Common myeloid progenitor, CD34-positive (primary cell): ENCODE measurements at regions of chr9 and their contacts with region 1.

Region 1: GRCh38 chr9:36023260-36024048 is 13.3 kb upstream of the RECK start:
- DNase-seq: peak; percentile 74 to 87 (median 81)
- H3K4me3 ChIP-seq: no peak overlapping the region
- H3K27ac ChIP-seq: no peak overlapping the region
- H3K4me1 ChIP-seq: no peaks in the 10 kb centered on the region
- H3K27me3 ChIP-seq: no peaks in the 10 kb centered on the region

Region 2: DNA sequence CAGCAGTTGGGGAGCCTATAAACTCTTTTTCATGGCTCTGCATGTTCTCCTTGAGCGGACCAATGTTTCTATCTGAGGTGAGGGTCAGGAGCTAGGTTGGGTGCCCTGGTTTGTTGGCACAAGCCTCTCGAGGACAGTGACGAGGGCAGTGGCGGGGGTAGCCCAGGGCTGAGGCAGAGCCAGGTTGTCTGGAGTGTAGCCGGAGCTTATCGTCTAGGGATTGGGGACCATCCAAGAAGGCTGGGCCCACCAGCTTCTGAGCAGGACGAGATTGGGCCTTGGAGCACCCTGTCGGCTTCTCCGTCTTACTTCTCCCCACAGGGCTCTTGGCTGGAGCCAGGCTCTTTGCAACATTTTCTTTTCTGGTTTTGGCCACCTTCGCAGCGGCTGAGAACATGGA is 1300.3 kb before region 1 on chr9:
- CTCF ChIA-PET with region 1: no interaction called
- POLR2A ChIA-PET with region 1: no interaction called
- DNase-seq: no peak
- H3K4me3 ChIP-seq: no peak overlapping the region
- H3K27ac ChIP-seq: no peak overlapping the region
- H3K4me1 ChIP-seq: no peaks in the 10 kb centered on the region
- H3K27me3 ChIP-seq: peaks cover 0 to 4% (median 0%) of the 10 kb centered on the region in 5 experiments

Region 3: GRCh38 chr9:35526087-35526801 is 497.2 kb before region 1 on chr9:
- CTCF ChIA-PET with region 1: no interaction called
- POLR2A ChIA-PET with region 1: no interaction called
- DNase-seq: peak in 2 of 3 donors; percentile 23 to 35
- H3K4me3 ChIP-seq: peak overlapping the region in 1 of 7 experiments; percentile 19
- H3K27ac ChIP-seq: no peak overlapping the region
- H3K4me1 ChIP-seq: peaks cover 3 to 20% (median 8%) of the 10 kb centered on the region in 4 experiments
- H3K27me3 ChIP-seq: no peaks in the 10 kb centered on the region

Region 4: DNA sequence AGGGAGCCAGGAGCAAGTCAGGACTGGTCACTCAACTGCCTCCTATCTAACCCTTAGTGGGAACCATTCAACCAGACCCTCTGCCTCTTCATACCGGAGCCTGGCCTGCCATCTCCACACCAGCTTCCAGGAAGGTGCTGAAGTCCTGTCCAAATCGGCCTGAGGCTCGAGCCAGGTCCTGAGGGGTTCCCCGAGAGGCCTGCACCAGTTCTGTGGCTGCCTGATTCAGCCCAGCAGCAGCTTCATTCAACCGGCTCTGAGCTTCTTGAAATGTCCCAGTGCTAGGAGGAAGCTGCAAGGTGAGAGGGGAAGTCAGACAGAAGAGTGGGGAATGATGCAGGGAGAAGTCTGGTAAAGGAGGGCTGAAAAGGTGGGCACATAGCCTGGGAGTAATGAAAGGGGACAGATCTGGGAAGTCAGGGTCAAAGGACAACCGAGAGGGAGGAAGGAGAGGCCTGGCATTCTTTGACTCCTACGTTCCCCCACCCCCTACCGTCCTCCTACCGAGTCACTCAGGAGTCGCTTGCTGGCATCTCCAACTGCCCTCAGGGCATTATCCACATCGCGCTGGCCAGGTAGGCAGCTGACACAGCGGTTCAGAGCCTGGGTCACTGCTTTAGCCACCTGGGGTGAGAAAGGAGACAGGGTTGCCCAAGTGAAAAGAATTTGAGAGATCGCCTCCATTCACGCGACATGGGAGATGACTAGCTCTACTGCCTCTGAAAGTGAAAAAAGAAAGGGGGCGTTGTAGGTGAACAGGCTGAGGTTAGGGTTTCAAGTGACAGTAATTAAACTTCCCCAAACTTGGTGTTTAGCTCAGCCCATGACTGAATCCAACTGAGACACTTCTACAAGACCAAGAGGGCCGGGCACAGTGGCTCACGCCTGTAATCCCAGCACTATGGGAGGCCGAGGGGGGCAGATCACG is 311.7 kb before region 1 on chr9:
- CTCF ChIA-PET with region 1: no interaction called
- POLR2A ChIA-PET with region 1: no interaction called
- DNase-seq: no peak
- H3K4me3 ChIP-seq: no peak overlapping the region
- H3K27ac ChIP-seq: peak overlapping the region in 1 of 2 experiments; percentile 32
- H3K4me1 ChIP-seq: no peaks in the 10 kb centered on the region
- H3K27me3 ChIP-seq: no peaks in the 10 kb centered on the region

Region 5: GRCh38 chr9:35954942-35955546 is 68.4 kb before region 1 on chr9:
- CTCF ChIA-PET with region 1: interaction called, 35 read pairs
- POLR2A ChIA-PET with region 1: interaction called, 4 read pairs
- DNase-seq: peak; percentile 75 to 89 (median 86)
- H3K4me3 ChIP-seq: no peak overlapping the region
- H3K27ac ChIP-seq: no peak overlapping the region
- H3K4me1 ChIP-seq: no peaks in the 10 kb centered on the region
- H3K27me3 ChIP-seq: peaks cover 0 to 9% (median 0%) of the 10 kb centered on the region in 5 experiments

Region 6: DNA sequence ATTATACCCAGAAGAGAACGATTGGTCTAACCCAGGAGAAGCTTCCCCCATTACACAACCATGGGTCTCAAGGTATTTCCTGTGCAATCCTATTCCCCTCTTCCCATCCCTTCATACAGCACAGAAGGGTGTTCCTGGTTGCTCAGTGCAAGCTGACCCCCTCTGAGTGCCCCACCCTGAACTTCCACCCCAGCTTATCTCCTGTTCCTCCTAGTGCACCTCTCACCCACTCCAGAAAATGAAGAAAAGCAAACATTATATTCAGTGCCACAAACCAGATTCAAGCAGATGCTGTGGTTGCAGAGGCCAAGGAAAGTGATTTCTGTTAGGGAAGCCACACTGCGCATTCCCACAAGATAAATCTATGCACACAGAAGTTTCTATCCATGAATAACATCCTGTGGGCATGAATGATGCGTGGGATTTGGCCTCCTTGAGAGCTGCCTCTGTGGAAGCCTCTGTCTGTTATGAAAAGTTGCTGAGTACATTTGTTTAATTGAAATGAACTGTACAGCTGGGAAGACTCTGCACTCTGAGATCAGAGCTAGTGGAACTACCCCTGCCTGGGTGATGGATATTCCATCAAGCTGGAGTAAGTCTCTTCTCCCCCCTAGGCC is 63.3 kb before region 1 on chr9:
- CTCF ChIA-PET with region 1: interaction called, 35 read pairs
- POLR2A ChIA-PET with region 1: interaction called, 4 read pairs
- DNase-seq: no peak
- H3K4me3 ChIP-seq: no peak overlapping the region
- H3K27ac ChIP-seq: no peak overlapping the region
- H3K4me1 ChIP-seq: no peaks in the 10 kb centered on the region
- H3K27me3 ChIP-seq: peaks cover 0 to 14% (median 0%) of the 10 kb centered on the region in 5 experiments

Region 7: GRCh38 chr9:35981699-35982098 is 41.8 kb before region 1 on chr9:
- CTCF ChIA-PET with region 1: interaction called, 11 read pairs
- POLR2A ChIA-PET with region 1: no interaction called
- DNase-seq: no peak
- H3K4me3 ChIP-seq: no peak overlapping the region
- H3K27ac ChIP-seq: no peak overlapping the region
- H3K4me1 ChIP-seq: peaks cover 0 to 2% (median 0%) of the 10 kb centered on the region in 4 experiments
- H3K27me3 ChIP-seq: peaks cover 0 to 6% (median 2%) of the 10 kb centered on the region in 5 experiments

Region 8: GRCh38 chr9:36008774-36009300 is 14.6 kb before region 1 on chr9:
- CTCF ChIA-PET with region 1: interaction called, 85 read pairs
- POLR2A ChIA-PET with region 1: no interaction called
- DNase-seq: peak; percentile 71 to 86 (median 85)
- H3K4me3 ChIP-seq: no peak overlapping the region
- H3K27ac ChIP-seq: no peak overlapping the region
- H3K4me1 ChIP-seq: peaks cover 0 to 3% (median 0%) of the 10 kb centered on the region in 4 experiments
- H3K27me3 ChIP-seq: peaks cover 0 to 10% (median 0%) of the 10 kb centered on the region in 5 experiments

Region 9: GRCh38 chr9:36036780-36037548 is 13.5 kb after region 1 on chr9 and contains the start of gene RECK:
- CTCF ChIA-PET with region 1: interaction called, 23 read pairs
- POLR2A ChIA-PET with region 1: no interaction called
- DNase-seq: peak; percentile 61 to 75 (median 74)
- H3K4me3 ChIP-seq: peak within 1 kb of the TSS; percentile 73 to 93 (median 88)
- H3K27ac ChIP-seq: peak within 1 kb of the TSS in 1 of 2 experiments; percentile 43
- H3K4me1 ChIP-seq: peaks cover 12 to 45% (median 19%) of the 10 kb centered on the region in 4 experiments
- H3K27me3 ChIP-seq: no peaks in the 10 kb centered on the region